GM10248 (cell line): ENCODE measurements at regions of chr6 and their contacts with region 1.

Region 1: DNA sequence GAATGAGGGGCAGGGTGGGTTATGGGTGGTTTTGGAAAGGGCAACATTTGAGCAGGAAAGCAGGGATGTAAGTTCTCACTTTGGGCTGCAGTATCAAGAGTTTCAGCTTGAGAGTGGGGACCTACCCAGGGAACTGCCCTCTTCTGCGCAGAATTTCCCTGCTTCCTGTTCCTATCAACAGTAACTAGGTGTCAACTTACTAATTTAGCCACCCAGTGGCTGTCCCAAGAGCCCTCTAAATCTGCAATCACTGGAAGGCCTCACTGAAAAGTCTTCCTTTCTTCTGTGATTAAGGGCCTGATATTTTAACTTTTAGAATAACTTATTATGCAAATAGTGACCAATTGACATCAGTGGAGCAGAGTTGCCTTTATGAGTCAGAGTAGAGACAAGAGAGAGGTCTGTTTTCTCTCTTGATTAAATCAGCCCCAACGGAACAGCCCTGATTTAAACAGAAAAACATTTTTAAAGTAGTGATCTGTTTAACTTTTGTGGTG is 118.2 kb upstream of the RIPOR2 start:
- DNase-seq: peak; percentile 48
- CTCF ChIP-seq: peak; percentile 13

Region 2: DNA sequence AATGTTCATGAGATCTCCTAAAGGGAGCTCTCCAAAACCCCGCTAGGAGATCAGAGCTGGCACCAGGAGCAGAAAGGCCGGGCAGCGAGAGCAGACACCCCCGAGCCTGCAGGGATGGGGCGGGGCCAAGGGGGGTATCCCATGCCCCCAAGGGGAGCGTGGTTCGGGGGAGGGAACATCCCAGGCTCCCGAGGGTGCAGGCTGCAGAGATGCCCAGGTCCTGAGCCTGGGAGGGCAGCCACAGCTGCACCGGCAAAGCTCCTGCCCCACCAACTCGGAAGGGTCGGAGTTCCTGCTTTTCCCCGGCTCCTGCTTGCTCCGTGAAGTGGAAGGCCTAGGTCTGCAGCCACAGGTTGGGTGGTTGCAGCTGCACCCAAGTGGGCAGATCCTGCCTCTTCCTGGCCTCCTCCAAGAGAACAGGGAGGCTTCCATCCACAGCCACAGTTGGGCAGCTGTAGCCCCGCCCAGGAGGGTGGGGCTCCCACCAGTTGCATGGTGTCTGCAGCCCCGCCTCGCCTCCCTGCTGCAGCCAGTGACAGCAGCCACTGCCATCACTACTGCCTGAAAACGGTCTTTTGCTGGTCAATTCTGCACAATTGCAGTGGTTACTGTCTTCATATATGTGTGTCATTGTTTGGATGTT is 292.6 kb before region 1 on chr6:
- CTCF ChIA-PET with region 1: no interaction called
- POLR2A ChIA-PET with region 1: no interaction called
- DNase-seq: no peak
- CTCF ChIP-seq: no peak

Region 3: DNA sequence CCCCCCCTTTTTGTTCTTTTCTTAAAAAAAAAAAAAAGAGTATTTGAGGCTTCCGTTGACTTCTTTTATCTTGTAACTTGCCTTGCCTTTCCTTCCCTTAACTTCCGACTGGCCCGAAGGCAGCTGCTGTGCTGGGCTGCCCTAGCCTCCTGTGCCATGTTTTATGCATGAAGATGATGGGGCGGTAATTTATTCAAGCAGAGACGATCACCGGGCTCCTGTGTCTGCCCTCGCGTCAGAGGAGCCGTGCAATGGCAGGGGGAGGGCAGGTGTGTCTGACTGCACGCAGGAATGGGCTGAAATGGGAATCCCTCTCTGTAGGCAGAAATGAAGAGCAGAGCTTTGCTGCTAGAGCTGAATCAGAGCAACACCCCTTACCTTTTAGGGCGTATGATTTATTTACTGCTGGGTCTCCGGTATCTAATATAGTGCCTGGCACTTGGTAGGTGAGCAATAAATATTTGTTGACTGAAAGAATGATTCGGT is 11.8 kb before region 1 on chr6:
- CTCF ChIA-PET with region 1: interaction called, 38 read pairs
- POLR2A ChIA-PET with region 1: interaction called, 5 read pairs
- DNase-seq: peak; percentile 28
- CTCF ChIP-seq: no peak

Region 4: DNA sequence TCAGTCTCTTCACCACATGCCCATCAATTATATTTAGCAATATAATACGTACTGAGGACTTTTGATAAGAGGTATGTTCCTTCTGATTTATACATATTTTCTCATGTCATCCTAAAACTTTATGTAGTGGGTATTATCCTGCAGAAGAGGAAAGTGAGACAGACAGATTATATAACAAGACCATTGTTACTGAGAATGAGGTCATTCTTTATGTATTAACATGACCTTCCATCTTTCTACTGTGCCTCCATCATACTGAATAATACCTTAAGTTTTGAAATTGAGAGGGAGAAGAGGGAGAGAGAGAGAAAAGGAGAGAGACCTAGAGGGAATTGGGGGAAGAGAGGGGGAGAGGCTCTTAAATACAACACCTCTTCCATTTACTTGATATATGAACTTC is 134.3 kb after region 1 on chr6:
- CTCF ChIA-PET with region 1: no interaction called
- POLR2A ChIA-PET with region 1: no interaction called
- DNase-seq: no peak
- CTCF ChIP-seq: no peak